Activated naive CD4-positive, alpha-beta T cell treated with anti-CD3 and anti-CD28 coated beads for 36 hours (primary cell): ENCODE measurements at regions of chr1 and their contacts with region 1.

Region 1: GRCh38 chr1:193417945-193418744 is 231.7 kb upstream of the B3GALT2 start:
- DNase-seq: no peak
- H3K4me3 Mint-ChIP-seq: peak overlapping the region; percentile 52
- H3K27ac Mint-ChIP-seq: peak overlapping the region; percentile 39
- H3K4me1 Mint-ChIP-seq: peaks cover 46% of the 10 kb centered on the region
- H3K27me3 Mint-ChIP-seq: no peaks in the 10 kb centered on the region

Region 2: DNA sequence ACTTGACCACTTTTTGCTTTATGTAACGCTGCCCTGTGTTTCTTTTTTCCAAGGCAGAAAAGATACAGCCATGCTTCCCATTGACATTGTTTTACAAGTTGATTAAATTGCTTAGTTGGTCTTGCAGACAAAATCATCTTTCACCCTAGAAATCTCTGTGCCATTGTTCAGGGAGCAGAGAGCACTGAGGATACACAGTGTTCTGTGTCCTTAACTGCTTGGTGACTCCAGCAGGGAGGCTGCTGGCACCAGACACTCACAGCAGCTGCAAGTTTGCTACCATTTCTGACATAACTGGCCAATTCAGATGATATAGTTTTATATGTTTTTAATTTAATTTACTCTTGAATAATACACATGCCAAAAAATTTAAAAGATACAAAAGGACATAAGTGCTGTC is 490.6 kb before region 1 on chr1:
- CTCF ChIA-PET with region 1: no interaction called
- intact Hi-C with region 1: no loop called
- DNase-seq: no peak
- H3K4me3 Mint-ChIP-seq: no peak overlapping the region
- H3K27ac Mint-ChIP-seq: no peak overlapping the region
- H3K4me1 Mint-ChIP-seq: no peaks in the 10 kb centered on the region
- H3K27me3 Mint-ChIP-seq: no peaks in the 10 kb centered on the region

Region 3: GRCh38 chr1:193377472-193377871 is 40.7 kb before region 1 on chr1:
- CTCF ChIA-PET with region 1: no interaction called
- intact Hi-C with region 1: no loop called
- DNase-seq: no peak
- H3K4me3 Mint-ChIP-seq: no peak overlapping the region
- H3K27ac Mint-ChIP-seq: no peak overlapping the region
- H3K4me1 Mint-ChIP-seq: no peaks in the 10 kb centered on the region
- H3K27me3 Mint-ChIP-seq: no peaks in the 10 kb centered on the region

Region 4: DNA sequence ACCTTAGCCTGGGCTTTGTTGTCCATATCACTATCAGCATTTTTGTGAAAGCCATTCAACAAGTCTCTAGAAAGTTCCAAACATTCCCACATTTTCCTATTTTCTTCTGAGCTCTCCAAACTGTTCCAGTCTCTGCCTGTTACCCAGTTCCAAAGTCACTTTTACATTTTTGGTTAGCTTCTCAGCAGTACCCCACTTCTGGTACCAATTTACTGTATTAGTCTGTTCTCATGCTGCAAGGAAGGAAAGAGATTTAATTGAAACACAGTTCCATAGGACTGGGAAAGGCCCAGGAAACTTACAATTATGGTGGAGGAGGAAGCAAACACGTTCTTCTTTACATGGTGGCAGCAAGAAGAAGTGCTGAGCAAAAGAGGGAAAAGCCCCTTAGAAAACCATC is 15.5 kb after region 1 on chr1:
- CTCF ChIA-PET with region 1: no interaction called
- intact Hi-C with region 1: no loop called
- DNase-seq: no peak
- H3K4me3 Mint-ChIP-seq: no peak overlapping the region
- H3K27ac Mint-ChIP-seq: no peak overlapping the region
- H3K4me1 Mint-ChIP-seq: peaks cover 7% of the 10 kb centered on the region
- H3K27me3 Mint-ChIP-seq: no peaks in the 10 kb centered on the region

Region 5: DNA sequence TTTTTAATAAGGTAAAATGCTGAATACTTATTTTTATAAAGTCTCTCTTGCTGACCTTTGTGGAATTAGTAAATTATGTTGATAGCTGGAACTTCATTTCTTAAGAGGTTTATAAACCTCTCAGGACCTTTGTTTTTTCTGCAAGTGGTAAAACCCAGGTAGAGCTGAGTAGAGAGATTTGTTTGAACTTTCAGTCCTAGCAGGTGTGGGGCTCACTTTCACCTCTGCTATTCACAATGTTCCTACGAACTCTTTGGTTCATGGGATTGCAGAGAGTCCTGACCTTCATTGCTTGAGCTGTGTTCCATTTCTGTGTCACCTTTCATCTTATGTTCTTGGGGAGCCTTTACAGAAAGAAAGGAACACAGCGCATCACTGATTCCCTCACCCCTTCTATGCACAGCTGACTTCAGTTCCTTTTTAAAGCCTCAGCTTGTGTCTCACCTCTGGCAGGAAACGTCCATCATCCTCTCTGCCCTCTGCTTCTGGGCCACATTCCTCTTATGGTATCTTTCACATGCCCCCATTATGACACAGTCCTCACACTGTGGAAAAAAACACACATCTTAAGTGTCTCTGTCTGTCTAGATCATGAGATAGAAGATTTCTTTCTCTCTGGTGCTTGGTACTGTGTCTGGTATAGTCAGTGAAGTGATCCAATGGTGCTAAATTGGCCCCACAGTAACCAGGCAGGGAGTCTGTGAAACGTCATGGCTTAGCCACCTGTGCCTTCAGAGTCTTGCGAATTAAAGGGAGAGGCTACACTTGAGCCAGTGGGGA is 30.7 kb after region 1 on chr1:
- CTCF ChIA-PET with region 1: interaction called, 4 read pairs
- intact Hi-C with region 1: loop called (anchors 2 kb)
- DNase-seq: peak; percentile 32
- H3K4me3 Mint-ChIP-seq: no peak overlapping the region
- H3K27ac Mint-ChIP-seq: peak overlapping the region; percentile 18
- H3K4me1 Mint-ChIP-seq: peaks cover 14% of the 10 kb centered on the region
- H3K27me3 Mint-ChIP-seq: no peaks in the 10 kb centered on the region

Region 6: DNA sequence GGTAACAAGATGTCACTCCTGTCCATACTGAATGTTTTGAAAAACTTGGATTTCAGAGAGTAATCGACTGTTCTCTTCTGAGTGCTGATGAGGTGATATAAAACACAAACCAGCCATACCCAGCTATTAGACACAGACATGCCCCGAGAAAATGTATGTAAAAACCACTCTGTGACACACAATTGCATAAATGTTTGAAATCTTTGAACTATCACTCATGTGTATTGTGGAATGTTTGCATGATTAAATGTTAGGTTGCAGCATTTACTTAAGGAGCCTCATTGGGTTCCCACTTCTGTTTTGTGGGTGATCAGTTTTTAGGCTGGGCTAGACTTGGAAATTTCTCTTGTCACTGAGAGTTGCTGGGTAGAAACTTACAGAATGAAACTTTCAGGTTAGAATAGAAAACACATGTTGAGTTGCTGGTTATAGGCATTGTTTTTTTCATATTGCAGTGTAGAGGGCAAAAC is 38.7 kb after region 1 on chr1:
- CTCF ChIA-PET with region 1: no interaction called
- intact Hi-C with region 1: loop called (anchors 2 kb)
- DNase-seq: no peak
- H3K4me3 Mint-ChIP-seq: no peak overlapping the region
- H3K27ac Mint-ChIP-seq: no peak overlapping the region
- H3K4me1 Mint-ChIP-seq: peaks cover 23% of the 10 kb centered on the region
- H3K27me3 Mint-ChIP-seq: no peaks in the 10 kb centered on the region

Region 7: DNA sequence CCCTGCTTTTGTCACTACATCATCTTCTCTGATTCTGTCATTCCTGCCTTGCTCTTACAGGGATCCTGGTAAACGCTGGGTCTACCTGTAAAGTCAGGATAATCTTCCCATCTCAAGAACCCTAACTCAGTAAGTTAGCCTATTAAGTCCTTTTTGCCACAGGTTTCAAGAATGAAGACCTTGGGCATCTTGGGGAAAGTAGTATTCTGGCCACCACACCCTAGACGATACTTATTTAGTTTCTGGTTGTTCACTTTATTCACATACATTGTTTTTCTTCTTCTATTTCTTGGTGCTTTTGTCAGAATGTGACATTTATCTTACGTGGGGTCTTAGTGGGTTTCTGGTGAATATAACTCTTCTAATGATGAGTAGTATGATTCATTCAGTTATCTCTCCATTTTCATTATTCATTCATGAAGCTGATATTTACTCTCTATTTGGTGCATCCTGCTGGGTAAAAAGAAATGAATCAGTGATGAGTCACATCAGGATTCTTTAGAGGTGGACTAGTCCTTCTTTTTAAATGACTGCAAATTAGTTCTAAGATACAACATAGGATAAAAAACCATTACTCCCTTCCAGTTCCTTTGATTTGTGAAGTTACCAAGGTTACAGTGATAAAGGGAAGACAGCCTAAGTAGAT is 282.7 kb after region 1 on chr1:
- CTCF ChIA-PET with region 1: no interaction called
- intact Hi-C with region 1: loop called (anchors 2 kb)
- DNase-seq: no peak
- H3K4me3 Mint-ChIP-seq: no peak overlapping the region
- H3K27ac Mint-ChIP-seq: no peak overlapping the region
- H3K4me1 Mint-ChIP-seq: peaks cover 15% of the 10 kb centered on the region
- H3K27me3 Mint-ChIP-seq: no peaks in the 10 kb centered on the region

Region 8: DNA sequence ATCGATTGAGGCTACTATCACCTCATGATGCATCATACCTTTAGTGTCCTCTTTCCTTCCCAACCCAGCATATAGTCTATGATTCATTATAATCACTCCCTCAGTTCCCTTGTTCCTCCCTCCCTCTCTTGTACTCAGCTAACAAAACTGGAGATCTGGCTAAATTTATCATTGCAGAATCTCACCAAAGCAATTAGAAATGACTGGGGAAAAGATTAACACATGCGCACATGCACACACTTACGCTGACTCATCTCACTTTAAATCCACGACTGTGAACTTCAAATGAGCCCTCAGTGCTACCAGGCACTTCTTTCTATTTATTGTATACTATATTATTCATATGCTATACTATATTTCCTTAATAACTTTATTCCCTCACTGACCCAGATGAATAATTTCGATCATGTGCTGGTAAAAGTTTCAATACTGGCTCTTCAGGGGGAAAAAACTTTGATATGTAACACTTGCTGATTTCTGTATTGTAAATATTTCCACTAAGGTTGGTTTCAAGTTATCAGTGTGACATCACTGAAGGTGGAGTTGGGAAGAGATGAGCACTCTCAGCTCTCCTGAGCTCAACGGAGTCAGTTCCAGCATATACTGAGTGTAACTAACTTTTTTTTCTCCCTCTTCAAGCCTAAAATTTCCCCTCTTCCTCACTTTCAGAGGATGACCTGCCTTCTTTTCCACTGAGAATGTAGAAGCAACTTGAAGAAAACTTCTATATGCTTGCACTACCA is 382.0 kb after region 1 on chr1:
- CTCF ChIA-PET with region 1: no interaction called
- intact Hi-C with region 1: loop called (anchors 5 kb)
- DNase-seq: peak; percentile 8
- H3K4me3 Mint-ChIP-seq: no peak overlapping the region
- H3K27ac Mint-ChIP-seq: no peak overlapping the region
- H3K4me1 Mint-ChIP-seq: peaks cover 16% of the 10 kb centered on the region
- H3K27me3 Mint-ChIP-seq: no peaks in the 10 kb centered on the region

Region 9: GRCh38 chr1:194052514-194053333 is 634.6 kb after region 1 on chr1:
- CTCF ChIA-PET with region 1: no interaction called
- intact Hi-C with region 1: loop called (anchors 5 kb)
- DNase-seq: no peak
- H3K4me3 Mint-ChIP-seq: peak overlapping the region; percentile 55
- H3K27ac Mint-ChIP-seq: peak overlapping the region; percentile 81
- H3K4me1 Mint-ChIP-seq: peaks cover 59% of the 10 kb centered on the region
- H3K27me3 Mint-ChIP-seq: no peaks in the 10 kb centered on the region